Dorsolateral prefrontal cortex (tissue), 120 donors: ENCODE measurements at regions of chr13 and their contacts with region 1.

Region 1: DNA sequence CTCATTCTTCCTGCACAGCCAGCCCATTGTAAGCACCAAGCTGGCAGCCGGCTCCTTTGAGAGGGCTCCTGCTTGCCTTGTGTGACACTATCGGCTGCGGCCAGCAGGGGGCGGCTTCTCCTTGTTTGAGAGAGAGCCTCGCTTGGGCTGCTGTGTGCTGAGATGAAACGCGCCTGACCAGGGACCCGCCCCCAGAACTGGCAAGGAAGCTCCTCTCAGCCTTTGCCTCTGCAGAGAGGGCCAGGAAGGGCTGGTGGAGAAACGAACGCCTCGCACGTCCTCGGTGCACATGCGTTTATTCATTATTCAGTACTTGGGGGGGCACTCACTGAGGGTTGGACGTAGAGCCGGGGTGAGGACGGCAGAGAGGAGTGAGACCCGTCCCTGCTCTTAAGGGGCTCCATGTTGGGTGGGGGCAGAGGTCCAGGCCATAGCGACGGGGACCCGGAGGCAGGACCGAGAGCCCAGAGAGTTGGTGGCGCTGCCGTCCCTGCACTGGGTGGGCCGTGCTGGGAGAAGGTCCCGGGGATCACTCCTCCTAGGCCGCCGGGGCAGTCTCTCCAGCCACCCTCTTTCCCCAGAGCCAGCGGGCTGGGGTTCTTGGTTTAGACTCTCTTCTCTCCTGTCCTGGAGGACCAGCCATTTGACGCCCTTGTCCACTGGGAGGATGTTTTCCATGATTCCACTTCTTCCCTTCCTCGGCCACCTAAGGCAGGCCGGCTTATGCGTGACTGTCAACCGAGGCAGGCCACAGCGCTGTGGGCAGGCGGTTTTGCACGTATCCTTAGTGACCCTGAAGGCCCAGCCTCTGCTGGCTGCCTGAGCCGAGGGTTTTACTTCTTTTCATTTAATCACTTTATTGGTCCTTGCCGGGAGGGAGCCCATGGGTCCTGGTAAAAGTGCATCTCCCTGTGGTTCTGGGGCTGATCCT is 174.5 kb downstream of the KATNAL1 start:
- DNase-seq: peak; percentile 96 to 100 (median 98)
- H3K4me3 ChIP-seq: peak overlapping the region in 42 of 59 donors; percentile 3 to 51 (median 28)
- H3K27ac ChIP-seq: peak overlapping the region in 19 of 59 donors; percentile 1 to 81 (median 44)
- H3K27me3 ChIP-seq: no peaks in the 10 kb centered on the region
- CTCF ChIP-seq: peak; percentile 82 to 99 (median 97)

Region 2: DNA sequence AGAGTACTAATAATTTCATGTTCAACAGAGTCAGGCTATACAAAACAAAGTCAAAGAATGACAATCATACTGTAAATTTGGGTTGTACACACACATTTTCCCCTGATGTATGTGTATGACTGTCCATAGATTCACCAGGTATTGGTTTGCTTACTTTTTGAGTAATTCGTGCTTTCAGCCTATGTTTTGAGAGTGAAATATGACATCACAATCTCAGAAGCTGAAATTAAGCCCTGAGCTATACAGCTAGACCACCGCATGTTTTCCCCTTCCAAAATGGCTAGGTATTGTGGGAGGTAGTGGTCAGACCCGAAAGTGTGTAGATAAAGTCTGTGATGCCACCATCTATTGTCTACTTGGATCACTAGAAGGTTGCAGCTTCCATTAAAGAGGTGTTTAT is 71.7 kb after region 1 on chr13:
- intact Hi-C with region 1: no loop called
- DNase-seq: no peak
- H3K4me3 ChIP-seq: no peak overlapping the region
- H3K27ac ChIP-seq: no peak overlapping the region
- H3K27me3 ChIP-seq: no peaks in the 10 kb centered on the region
- CTCF ChIP-seq: no peak

Region 3: GRCh38 chr13:30257468-30258099 is 124.7 kb after region 1 on chr13:
- intact Hi-C with region 1: loop called in 1 of 2 experiments (anchors 5 kb)
- DNase-seq: peak in 3 of 10 donors; percentile 33 to 64 (median 51)
- H3K4me3 ChIP-seq: peak overlapping the region in 8 of 59 donors; percentile 0 to 31 (median 12)
- H3K27ac ChIP-seq: peak overlapping the region in 53 of 59 donors; percentile 3 to 80 (median 64)
- H3K27me3 ChIP-seq: no peaks in the 10 kb centered on the region
- CTCF ChIP-seq: no peak

Region 4: GRCh38 chr13:30408319-30409101 is 275.6 kb after region 1 on chr13:
- intact Hi-C with region 1: loop called in 1 of 2 experiments (anchors 5 kb)
- DNase-seq: peak; percentile 85 to 92 (median 90)
- H3K4me3 ChIP-seq: peak overlapping the region; percentile 27 to 71 (median 56)
- H3K27ac ChIP-seq: peak overlapping the region; percentile 1 to 93 (median 82)
- H3K27me3 ChIP-seq: no peaks in the 10 kb centered on the region
- CTCF ChIP-seq: peak; percentile 44 to 91 (median 77)

Region 5: GRCh38 chr13:30679483-30680330 is 546.8 kb after region 1 on chr13:
- intact Hi-C with region 1: loop called in 1 of 2 experiments (anchors 5 kb)
- DNase-seq: peak in 3 of 10 donors; percentile 39 to 49 (median 40)
- H3K4me3 ChIP-seq: peak overlapping the region in 2 of 59 donors; percentile 15 to 24
- H3K27ac ChIP-seq: peak overlapping the region in 20 of 59 donors; percentile 0 to 66 (median 29)
- H3K27me3 ChIP-seq: no peaks in the 10 kb centered on the region
- CTCF ChIP-seq: peak in 55 of 56 donors; percentile 33 to 77 (median 59)

Region 6: DNA sequence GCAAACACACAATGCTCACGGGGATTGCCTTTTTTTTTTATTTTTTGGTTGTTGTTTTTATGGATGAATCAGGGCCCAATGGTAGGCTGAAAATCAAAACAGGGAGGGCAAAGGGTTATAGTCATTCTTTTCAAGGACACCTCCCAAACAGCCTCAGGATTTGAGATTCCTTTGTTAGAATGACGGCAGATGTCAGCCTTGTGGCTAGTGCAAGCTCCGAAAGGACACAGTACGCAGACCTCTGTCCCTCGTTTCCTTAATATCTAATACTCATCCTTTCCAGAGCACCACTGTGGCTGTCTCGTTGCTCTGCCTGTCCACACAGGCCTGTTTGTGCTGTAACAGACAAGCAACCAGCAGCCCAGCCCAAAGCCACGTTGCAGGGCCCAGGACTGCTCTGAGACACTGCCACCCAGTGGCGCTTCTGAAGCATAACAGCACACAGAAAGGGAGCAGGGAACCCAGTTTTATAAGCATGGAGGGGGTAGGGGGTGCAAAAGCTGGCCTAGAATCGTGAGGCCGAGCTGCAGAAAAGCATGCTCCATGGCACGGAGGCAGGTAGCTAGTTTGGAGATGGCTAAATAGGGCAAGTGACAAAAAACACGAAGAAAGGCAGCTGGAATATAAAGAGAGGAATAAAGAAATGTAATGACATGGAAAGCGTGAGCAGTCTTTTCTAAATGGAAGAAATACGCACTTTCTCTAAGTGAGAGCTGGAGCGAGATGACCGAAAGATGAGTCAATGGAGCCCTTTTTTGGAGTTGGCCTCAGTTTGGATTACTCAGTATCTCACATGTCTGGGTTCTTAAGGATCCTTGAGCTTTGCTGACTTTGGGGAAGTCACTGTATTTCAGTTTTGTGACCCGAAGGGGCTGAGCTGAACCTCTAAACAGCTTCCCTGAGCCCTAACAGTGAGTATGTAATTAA is 732.5 kb after region 1 on chr13:
- intact Hi-C with region 1: loop called (anchors 5 kb)
- DNase-seq: peak; percentile 57 to 88 (median 84)
- H3K4me3 ChIP-seq: peak overlapping the region in 5 of 59 donors; percentile 2 to 15 (median 5)
- H3K27ac ChIP-seq: peak overlapping the region in 56 of 59 donors; percentile 6 to 91 (median 76)
- H3K27me3 ChIP-seq: no peaks in the 10 kb centered on the region
- CTCF ChIP-seq: peak; percentile 76 to 96 (median 90)